A673 (cell line): ENCODE measurements at regions of chr11 and their contacts with region 1.

Region 1: DNA sequence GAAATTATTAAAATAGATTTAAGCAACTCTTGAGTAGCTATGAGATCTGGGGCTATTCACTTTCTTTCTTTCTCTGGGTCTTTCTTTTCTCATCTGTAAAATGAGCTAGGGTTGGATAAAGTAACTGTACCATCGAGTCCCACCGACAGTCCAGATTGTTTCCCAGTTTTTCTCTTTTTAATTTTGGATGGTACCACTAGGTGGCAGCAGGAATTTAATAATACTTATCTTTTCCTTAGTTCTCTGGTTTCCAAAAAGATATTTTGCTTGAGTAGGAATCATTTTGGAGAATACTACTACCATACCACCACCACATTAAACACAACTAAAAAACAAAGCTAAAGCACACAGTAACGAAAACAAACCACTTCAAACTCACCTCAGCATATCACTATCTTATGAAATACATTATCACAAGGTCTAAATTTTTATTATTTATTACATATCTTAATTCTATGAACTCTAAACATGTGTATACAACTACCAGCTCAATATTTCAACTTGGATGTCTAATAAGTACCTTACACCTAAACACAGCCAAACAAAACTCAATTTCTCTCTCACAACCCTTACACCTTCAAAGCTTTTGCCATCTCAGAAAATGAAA is 584.0 kb downstream of the KCNA4 start:
- DNase-seq: peak; percentile 81
- H3K4me3 ChIP-seq: no peak overlapping the region
- H3K27ac ChIP-seq: no peak overlapping the region
- H3K4me1 ChIP-seq: no peaks in the 10 kb centered on the region
- H3K27me3 ChIP-seq: peaks cover 10% of the 10 kb centered on the region
- CTCF ChIP-seq: peak; percentile 92

Region 2: DNA sequence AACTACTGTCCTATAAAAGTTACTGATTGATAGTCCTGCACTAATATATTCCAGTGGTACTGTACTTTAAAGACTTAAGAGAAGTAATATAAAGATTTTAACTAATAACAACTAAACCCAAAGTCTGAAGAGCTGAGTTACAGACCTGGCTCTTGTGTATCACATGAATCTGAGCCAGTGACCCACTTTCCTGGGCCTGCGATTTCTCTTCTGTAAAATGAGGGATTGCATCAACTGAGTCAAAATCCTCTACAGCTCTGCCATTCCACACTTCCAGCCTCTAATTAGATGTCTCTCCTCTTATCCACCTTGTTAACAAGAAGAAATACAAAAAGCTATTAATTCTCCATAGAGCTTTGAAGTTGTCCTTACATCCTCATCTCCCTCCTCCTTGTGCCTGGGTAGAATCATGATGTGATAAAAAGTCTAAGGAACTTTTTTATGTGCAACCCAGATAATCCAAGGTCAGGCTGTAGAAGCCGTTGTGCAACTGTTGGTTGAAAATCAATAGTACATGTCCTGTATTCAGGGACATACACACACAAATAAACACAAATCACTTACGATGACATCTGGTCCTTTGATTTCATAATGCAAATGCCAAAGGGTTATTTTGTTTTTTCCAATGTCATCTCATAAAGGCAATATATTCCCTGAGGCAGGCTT is 173.6 kb after region 1 on chr11:
- CTCF ChIA-PET with region 1: no interaction called
- POLR2A ChIA-PET with region 1: no interaction called
- intact Hi-C with region 1: no loop called
- DNase-seq: no peak
- H3K4me3 ChIP-seq: no peak overlapping the region
- H3K27ac ChIP-seq: no peak overlapping the region
- H3K4me1 ChIP-seq: no peaks in the 10 kb centered on the region
- H3K27me3 ChIP-seq: no peaks in the 10 kb centered on the region
- CTCF ChIP-seq: no peak

Region 3: GRCh38 chr11:30292545-30292944 is 859.7 kb after region 1 on chr11:
- CTCF ChIA-PET with region 1: interaction called, 13 read pairs
- POLR2A ChIA-PET with region 1: no interaction called
- intact Hi-C with region 1: no loop called
- DNase-seq: no peak
- H3K4me3 ChIP-seq: no peak overlapping the region
- H3K27ac ChIP-seq: no peak overlapping the region
- H3K4me1 ChIP-seq: no peaks in the 10 kb centered on the region
- H3K27me3 ChIP-seq: peaks cover 44% of the 10 kb centered on the region
- CTCF ChIP-seq: no peak

Region 4: DNA sequence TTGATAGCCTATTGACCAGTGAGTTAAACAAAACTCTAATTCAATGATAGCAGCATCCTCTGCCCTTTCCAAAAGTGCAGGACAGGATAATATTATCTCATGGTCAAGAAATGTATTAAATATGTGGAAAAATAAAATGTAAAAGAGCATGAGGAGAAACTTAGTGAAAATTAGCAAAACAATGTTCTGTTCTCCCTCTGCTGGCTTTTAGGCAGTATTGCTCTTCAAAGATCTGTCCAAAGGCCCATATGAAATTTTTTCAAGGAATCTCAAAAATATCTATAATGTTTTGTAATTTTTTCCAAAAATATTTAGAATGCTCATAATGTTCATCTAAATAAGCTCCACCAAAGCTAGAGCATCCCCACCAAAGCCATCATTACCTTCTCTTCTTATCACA is 881.8 kb after region 1 on chr11:
- CTCF ChIA-PET with region 1: interaction called, 3 read pairs
- POLR2A ChIA-PET with region 1: no interaction called
- intact Hi-C with region 1: loop called (anchors 5 kb)
- DNase-seq: peak; percentile 39
- H3K4me3 ChIP-seq: no peak overlapping the region
- H3K27ac ChIP-seq: no peak overlapping the region
- H3K4me1 ChIP-seq: no peaks in the 10 kb centered on the region
- H3K27me3 ChIP-seq: peaks cover 2% of the 10 kb centered on the region
- CTCF ChIP-seq: peak; percentile 79